Dendritic cell treated with granulocyte-macrophage colony-stimulating factor and Interleukin-4, amounts not matched to agents 40 ng/mL and 50 ng/mL, for 4 days (primary cell): ENCODE measurements at regions of chr12 and their contacts with region 1.

Region 1: DNA sequence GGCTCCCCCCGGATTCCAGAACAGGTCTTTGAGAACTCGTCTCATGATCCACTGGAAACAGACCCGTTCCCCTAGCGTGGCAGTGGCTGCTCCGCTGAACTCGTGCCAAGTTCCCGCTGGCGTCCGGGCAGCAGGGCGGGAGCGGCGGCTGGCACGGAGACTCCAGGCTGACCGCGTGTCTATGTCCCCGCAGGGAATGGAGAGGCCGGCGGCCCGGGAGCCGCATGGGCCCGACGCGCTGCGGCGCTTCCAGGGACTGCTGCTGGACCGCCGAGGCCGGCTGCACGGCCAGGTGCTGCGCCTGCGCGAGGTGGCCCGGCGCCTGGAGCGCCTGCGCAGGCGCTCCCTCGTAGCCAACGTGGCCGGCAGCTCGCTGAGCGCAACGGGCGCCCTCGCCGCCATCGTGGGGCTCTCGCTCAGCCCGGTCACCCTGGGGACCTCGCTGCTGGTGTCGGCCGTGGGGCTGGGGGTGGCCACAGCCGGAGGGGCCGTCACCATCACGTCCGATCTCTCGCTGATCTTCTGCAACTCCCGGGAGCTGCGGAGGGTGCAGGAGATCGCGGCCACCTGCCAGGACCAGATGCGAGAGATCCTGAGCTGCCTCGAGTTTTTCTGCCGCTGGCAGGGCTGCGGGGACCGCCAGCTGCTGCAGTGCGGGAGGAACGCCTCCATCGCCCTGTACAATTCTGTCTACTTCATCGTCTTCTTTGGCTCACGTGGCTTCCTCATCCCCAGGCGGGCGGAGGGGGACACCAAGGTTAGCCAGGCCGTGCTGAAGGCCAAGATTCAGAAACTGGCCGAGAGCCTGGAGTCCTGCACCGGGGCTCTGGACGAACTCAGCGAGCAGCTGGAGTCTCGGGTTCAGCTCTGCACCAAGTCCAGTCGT is 1.5 kb downstream of the APOLD1 start:
- H3K4me3 Mint-ChIP-seq: peak overlapping the region; percentile 79
- H3K27ac Mint-ChIP-seq: peak overlapping the region; percentile 81
- H3K4me1 Mint-ChIP-seq: peaks cover 16% of the 10 kb centered on the region
- H3K27me3 Mint-ChIP-seq: peaks cover 7% of the 10 kb centered on the region

Region 2: DNA sequence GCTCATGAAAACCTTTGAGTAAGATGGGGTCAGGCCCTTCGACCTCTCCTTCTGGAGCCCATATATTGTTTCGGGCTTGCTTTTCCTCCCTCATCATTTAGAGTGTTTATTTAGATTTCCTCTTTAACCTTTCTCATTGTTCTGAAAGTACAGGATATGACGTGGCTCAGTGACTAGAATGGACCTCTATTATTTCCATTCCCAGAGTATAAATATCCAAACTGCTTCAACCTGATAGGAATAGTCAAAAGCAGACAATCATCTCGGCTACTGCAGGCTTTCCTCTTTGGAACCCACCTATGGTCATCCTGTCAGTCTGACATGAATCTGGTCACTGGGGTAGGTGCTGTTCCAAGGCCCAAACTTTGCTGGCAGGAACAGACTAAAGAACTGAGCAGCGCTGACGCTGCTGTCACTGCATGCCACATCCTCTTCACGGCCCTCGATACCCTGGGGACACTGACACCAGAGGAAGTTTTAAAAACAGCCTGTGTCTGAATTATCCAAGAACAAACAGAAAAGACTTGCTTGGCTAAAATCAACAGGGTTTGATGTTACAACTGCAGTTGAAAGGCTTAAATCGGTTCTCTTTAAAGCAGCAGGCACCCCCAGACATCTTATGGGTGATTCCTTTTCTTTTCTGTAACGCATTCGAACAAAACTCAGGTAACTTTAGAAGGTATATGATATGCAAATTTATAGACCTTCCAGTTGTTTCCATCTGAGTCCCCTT is 21.2 kb after region 1 on chr12:
- intact Hi-C with region 1: loop called (anchors 2 kb)
- H3K4me3 Mint-ChIP-seq: no peak overlapping the region
- H3K27ac Mint-ChIP-seq: peak overlapping the region; percentile 83
- H3K4me1 Mint-ChIP-seq: peaks cover 45% of the 10 kb centered on the region
- H3K27me3 Mint-ChIP-seq: no peaks in the 10 kb centered on the region

Region 3: DNA sequence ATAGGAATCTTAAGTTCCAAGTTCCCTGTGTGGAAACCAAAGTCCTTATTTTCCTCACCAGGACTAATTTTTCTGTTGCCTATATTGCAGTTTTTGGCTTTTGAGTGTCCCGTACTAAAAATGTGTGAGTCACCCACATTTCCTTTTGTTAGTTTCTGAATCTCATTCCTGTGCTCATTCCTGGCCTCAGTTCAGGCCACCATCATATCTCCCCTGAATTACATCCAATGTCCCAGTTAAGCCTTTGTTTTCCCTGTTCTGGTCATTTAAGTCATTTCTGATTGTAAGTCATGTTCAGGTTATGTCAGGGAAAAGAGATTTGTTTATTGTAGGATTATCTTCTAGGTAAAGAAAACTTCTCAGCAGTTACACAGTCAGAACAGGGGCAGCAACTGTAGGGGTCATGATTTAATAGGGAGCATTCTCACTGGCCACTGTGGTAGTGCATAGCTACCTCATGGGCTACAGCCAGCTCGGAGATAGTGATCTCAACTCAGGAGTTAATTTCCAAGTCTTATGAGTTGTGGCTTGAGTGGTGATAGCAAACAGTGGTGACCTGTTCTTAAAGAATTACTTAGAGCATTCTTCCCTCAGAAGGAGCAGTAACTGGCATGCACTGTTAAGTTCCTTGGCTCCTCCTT is 32.8 kb after region 1 on chr12:
- intact Hi-C with region 1: no loop called
- H3K4me3 Mint-ChIP-seq: no peak overlapping the region
- H3K27ac Mint-ChIP-seq: no peak overlapping the region
- H3K4me1 Mint-ChIP-seq: peaks cover 25% of the 10 kb centered on the region
- H3K27me3 Mint-ChIP-seq: no peaks in the 10 kb centered on the region

Region 4: DNA sequence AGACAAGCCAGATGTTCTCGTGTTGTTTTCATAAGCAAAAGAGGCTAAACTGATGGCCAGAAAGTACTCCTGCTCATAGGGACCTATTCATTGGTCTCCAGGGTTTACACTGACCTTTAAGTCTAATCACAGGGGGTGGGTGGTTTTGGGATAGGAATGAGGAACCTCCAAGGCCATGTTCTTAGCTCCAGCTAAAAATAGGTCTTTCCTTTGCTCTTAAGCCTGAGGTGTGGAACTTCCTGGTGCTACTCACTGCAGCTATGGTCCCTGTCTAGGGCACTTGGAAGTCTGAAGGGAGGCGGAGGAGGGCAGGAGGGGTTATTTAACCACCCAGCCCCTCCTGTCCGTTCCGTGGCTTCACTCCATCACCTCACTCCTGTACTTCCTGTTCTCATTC is 123.0 kb after region 1 on chr12:
- intact Hi-C with region 1: loop called (anchors 5 kb)
- H3K4me3 Mint-ChIP-seq: no peak overlapping the region
- H3K27ac Mint-ChIP-seq: no peak overlapping the region
- H3K4me1 Mint-ChIP-seq: peaks cover 26% of the 10 kb centered on the region
- H3K27me3 Mint-ChIP-seq: peaks cover 3% of the 10 kb centered on the region

Region 5: GRCh38 chr12:12983420-12984035 is 196.6 kb after region 1 on chr12:
- intact Hi-C with region 1: loop called (anchors 10 kb)
- H3K4me3 Mint-ChIP-seq: no peak overlapping the region
- H3K27ac Mint-ChIP-seq: no peak overlapping the region
- H3K4me1 Mint-ChIP-seq: no peaks in the 10 kb centered on the region
- H3K27me3 Mint-ChIP-seq: no peaks in the 10 kb centered on the region